Activated CD4-positive, alpha-beta memory T cell treated with anti-CD3 and anti-CD28 coated beads for 36 hours (primary cell): ENCODE measurements at regions of chr7 and their contacts with region 1.

Region 1: GRCh38 chr7:105013221-105013815 is 687 bp upstream of the KMT2E start:
- DNase-seq: peak; percentile 96
- H3K4me3 Mint-ChIP-seq: peak overlapping the region; percentile 99
- H3K27ac Mint-ChIP-seq: peak overlapping the region; percentile 100
- H3K4me1 Mint-ChIP-seq: peaks cover 20% of the 10 kb centered on the region
- H3K27me3 Mint-ChIP-seq: no peaks in the 10 kb centered on the region

Region 2: DNA sequence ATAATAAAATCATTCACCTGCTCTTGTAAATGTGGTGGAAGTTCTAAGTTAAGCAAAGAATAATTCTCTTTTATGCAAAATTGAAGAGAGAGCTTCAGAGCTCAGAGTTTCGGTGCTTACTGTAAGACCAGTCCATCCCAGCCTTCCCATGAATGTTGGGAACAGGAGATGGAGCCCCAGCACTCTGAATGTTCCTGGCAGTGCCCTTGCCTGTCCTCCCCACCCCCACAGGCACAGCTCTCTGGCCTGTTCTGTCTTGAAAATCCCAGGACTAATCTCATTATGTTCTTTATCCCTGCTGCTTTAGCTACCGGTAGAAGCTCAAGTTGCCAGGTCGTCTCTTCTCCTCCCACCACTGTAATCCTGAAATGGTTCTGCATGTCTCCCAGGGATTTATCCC is 714.0 kb before region 1 on chr7:
- CTCF ChIA-PET with region 1: no interaction called
- POLR2A ChIA-PET with region 1: no interaction called
- intact Hi-C with region 1: no loop called
- DNase-seq: no peak
- H3K4me3 Mint-ChIP-seq: no peak overlapping the region
- H3K27ac Mint-ChIP-seq: no peak overlapping the region
- H3K4me1 Mint-ChIP-seq: peaks cover 4% of the 10 kb centered on the region
- H3K27me3 Mint-ChIP-seq: peaks cover 10% of the 10 kb centered on the region

Region 3: DNA sequence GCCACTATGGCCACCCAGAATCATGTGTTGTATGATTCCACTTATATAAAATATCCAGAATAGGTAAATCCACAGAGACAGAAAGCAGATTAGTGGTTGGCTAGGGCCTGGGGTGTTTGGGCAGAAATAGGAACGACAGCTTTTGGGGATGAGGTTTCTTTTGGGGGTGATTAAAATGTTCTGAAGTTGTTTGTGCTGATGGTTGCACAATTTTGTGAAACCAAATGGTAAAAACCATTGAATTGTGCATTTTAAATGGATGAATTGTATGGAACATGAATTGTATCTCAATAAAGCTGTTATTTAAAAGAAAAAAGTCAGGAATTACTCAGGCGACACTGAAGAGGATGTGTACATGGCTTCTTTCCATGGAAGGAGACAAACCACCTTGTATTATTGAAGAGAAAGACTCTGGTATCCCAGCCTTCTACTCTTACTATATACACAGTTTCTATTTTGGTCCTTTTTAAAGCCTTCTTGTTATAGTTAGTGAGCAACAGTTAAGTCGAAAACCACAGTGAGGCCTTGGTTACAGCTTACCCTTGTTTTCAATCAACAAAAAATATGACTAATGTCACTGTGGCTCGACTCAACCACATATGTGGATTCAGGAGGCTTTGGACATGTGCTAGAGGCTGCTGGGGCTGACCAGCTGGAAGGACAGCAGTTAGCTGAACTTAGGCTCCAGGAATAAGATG is 56.4 kb before region 1 on chr7:
- CTCF ChIA-PET with region 1: interaction called, 3 read pairs
- POLR2A ChIA-PET with region 1: interaction called, 12 read pairs
- intact Hi-C with region 1: loop called (anchors 1 kb)
- DNase-seq: peak; percentile 60
- H3K4me3 Mint-ChIP-seq: peak overlapping the region; percentile 33
- H3K27ac Mint-ChIP-seq: peak overlapping the region; percentile 94
- H3K4me1 Mint-ChIP-seq: peaks cover 47% of the 10 kb centered on the region
- H3K27me3 Mint-ChIP-seq: no peaks in the 10 kb centered on the region

Region 4: DNA sequence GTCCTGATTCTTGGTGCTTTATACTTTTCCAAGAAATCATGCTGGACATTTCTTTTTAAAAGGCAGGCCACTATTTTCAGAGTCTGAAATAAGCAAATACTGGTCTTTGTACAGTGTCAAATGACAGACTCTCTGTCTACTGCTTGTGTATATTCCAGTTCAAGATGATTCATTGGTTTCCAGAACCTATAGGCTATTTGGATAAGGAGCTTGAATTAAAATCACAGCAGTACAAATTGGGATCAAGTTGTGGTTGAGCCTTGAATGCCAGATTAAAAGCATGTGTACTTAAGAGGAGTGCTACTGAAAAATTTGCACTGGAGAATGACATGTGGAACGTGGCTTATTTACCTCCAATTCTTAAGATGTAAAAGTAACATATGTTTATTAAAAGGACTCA is 11.4 kb after region 1 on chr7:
- CTCF ChIA-PET with region 1: interaction called, 3 read pairs
- POLR2A ChIA-PET with region 1: interaction called, 31 read pairs
- intact Hi-C with region 1: no loop called
- DNase-seq: no peak
- H3K4me3 Mint-ChIP-seq: no peak overlapping the region
- H3K27ac Mint-ChIP-seq: peak overlapping the region; percentile 56
- H3K4me1 Mint-ChIP-seq: peaks cover 85% of the 10 kb centered on the region
- H3K27me3 Mint-ChIP-seq: no peaks in the 10 kb centered on the region

Region 5: DNA sequence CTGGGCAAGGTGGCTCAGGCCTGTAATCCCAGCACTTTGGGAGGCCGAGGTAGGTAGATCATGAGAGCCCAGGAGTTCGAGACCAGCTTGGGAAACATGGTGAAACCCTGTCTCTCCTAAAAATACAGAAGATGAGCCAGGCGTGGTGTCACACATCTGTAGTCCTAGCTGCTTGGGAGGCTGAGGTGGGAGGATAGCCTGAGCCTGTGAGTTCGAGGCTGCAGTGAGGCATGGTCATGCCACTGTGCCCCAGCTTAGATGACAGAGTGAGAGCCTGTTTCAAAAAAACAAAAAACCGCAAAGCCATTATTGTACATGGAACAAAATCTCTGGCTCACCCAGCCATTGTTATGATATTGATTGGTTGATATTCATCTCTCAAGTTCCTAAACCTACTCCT is 54.4 kb after region 1 on chr7:
- CTCF ChIA-PET with region 1: no interaction called
- POLR2A ChIA-PET with region 1: no interaction called
- intact Hi-C with region 1: no loop called
- DNase-seq: no peak
- H3K4me3 Mint-ChIP-seq: no peak overlapping the region
- H3K27ac Mint-ChIP-seq: peak overlapping the region; percentile 7
- H3K4me1 Mint-ChIP-seq: peaks cover 27% of the 10 kb centered on the region
- H3K27me3 Mint-ChIP-seq: no peaks in the 10 kb centered on the region

Region 6: DNA sequence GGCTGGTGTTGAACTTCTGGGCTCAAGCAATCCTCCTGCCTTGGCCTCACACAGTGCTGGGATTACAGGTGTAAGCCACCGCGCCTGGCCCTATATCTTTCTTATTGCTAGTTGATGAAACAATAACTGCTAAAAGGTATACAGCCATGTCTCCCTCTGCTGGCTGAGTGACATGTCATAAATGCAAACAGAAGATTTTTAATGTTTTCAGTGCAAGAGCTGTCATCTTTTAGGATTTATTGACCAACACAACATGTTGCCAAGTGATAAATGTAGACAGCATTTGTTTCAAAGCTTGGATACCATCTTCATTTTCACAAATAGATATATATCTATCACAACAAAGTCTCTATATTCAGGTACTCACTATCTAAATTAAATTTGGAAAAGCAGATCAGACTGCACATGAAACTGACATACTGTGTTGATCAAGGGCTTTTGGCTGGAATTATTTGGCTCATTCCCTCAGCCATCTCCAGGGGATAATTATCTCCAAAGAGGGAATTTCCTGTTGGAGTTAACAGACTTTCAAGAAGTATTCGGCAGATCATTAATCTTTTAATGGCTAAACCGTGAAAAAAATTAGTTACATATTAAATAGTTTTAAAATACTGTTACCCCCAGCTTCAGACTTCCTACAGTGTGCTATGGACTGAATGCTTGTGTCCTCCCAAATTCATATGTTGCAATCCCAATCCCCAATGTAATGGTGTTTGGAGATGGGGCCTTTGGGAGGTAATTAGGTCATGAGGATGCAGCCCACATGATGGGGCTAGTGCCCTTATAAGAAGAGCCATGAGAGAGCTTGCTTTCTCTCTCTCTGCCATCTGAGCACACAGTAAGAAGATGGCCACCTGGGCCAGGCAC is 416.7 kb after region 1 on chr7:
- CTCF ChIA-PET with region 1: no interaction called
- POLR2A ChIA-PET with region 1: no interaction called
- intact Hi-C with region 1: no loop called
- DNase-seq: peak; percentile 57
- H3K4me3 Mint-ChIP-seq: no peak overlapping the region
- H3K27ac Mint-ChIP-seq: no peak overlapping the region
- H3K4me1 Mint-ChIP-seq: peaks cover 19% of the 10 kb centered on the region
- H3K27me3 Mint-ChIP-seq: no peaks in the 10 kb centered on the region

Region 7: GRCh38 chr7:105531792-105532671 is 518.7 kb after region 1 on chr7 and contains the start of gene RINT1:
- CTCF ChIA-PET with region 1: no interaction called
- POLR2A ChIA-PET with region 1: interaction called, 3 read pairs
- intact Hi-C with region 1: loop called (anchors 2 kb)
- DNase-seq: peak; percentile 94
- H3K4me3 Mint-ChIP-seq: peak within 1 kb of the TSS; percentile 86
- H3K27ac Mint-ChIP-seq: peak within 1 kb of the TSS; percentile 88
- H3K4me1 Mint-ChIP-seq: peaks cover 22% of the 10 kb centered on the region
- H3K27me3 Mint-ChIP-seq: no peaks in the 10 kb centered on the region
- total RNA-seq, gene RINT1: 23.3 to 26.7 TPM

Region 8: GRCh38 chr7:106285051-106285854 is 1271.9 kb after region 1 on chr7:
- CTCF ChIA-PET with region 1: no interaction called
- POLR2A ChIA-PET with region 1: interaction called, 3 read pairs
- intact Hi-C with region 1: loop called (anchors 5 kb)
- DNase-seq: peak; percentile 100
- H3K4me3 Mint-ChIP-seq: peak overlapping the region; percentile 92
- H3K27ac Mint-ChIP-seq: peak overlapping the region; percentile 99
- H3K4me1 Mint-ChIP-seq: peaks cover 50% of the 10 kb centered on the region
- H3K27me3 Mint-ChIP-seq: peaks cover 2% of the 10 kb centered on the region